Endothelial cell of umbilical vein (primary cell): ENCODE measurements at regions of chr5 and their contacts with region 1.

Region 1: GRCh38 chr5:148957591-148958202 is 105.2 kb downstream of the SH3TC2 start:
- DNase-seq: peak; percentile 66
- H3K4me3 ChIP-seq: no peak overlapping the region
- H3K27ac ChIP-seq: no peak overlapping the region
- H3K4me1 ChIP-seq: no peaks in the 10 kb centered on the region
- H3K27me3 ChIP-seq: no peaks in the 10 kb centered on the region
- CTCF ChIP-seq: peak; percentile 77 to 88
- POLR2A ChIP-seq: no peak

Region 2: GRCh38 chr5:148523139-148523538 is 434.6 kb before region 1 on chr5:
- CTCF ChIA-PET with region 1: no interaction called
- POLR2A ChIA-PET with region 1: no interaction called
- dilution Hi-C with region 1: no loop called
- intact Hi-C with region 1: no loop called
- DNase-seq: no peak
- H3K4me3 ChIP-seq: no peak overlapping the region
- H3K27ac ChIP-seq: no peak overlapping the region
- H3K4me1 ChIP-seq: no peaks in the 10 kb centered on the region
- H3K27me3 ChIP-seq: no peaks in the 10 kb centered on the region
- CTCF ChIP-seq: no peak
- POLR2A ChIP-seq: no peak

Region 3: GRCh38 chr5:148805326-148806290 is 152.1 kb before region 1 on chr5:
- CTCF ChIA-PET with region 1: interaction called, 23 read pairs
- POLR2A ChIA-PET with region 1: no interaction called
- dilution Hi-C with region 1: no loop called
- intact Hi-C with region 1: no loop called
- DNase-seq: peak; percentile 77
- H3K4me3 ChIP-seq: no peak overlapping the region
- H3K27ac ChIP-seq: peak overlapping the region; percentile 10
- H3K4me1 ChIP-seq: peaks cover 35% of the 10 kb centered on the region
- H3K27me3 ChIP-seq: no peaks in the 10 kb centered on the region
- CTCF ChIP-seq: no peak
- POLR2A ChIP-seq: no peak

Region 4: DNA sequence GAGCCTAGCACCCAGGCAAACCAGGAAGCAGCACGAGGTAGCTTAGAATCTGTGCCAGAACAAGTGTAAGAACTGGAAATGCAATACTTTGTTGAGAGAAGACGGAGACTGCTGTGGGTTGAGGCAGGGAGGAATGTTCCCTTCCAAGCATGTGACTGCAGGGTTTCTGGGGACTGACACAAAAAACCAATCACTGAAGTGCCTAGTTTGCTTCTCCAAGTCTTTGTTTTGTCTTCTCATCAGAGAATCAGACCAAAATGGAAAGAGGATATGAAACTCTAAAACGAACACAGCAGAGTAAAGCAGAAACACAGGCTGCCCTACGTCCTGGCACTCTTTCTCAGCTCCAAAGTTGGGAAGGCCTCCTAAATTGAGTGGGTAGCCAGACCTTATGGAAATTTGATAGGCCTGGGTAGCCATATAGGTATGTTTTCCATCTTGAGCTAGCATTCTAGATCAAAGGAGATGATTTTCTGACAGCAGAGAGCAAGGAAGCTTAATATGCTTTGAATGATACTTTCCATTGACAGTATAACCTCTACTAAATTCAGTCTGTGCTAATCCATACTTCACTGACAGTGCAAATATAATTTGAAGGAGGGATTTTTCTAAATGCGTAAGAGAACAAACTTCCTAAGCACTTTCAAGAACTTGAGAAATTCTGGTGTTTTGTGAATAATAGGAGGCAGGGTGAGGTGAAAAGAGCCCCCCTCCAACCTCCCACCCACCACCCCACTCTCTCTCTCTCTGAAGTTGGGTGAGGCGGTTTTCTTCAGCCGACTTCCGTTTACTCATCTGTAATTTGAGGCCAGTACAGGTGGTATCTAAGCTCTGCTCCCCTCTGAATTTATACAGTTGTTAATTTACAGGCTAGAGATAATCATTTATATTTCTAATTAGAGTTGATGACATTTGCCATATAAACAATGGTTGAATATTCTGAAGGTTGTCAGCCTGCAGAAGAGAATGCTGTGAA is 125.8 kb before region 1 on chr5:
- CTCF ChIA-PET with region 1: interaction called, 28 read pairs
- POLR2A ChIA-PET with region 1: no interaction called
- dilution Hi-C with region 1: no loop called
- intact Hi-C with region 1: no loop called
- DNase-seq: no peak
- H3K4me3 ChIP-seq: no peak overlapping the region
- H3K27ac ChIP-seq: no peak overlapping the region
- H3K4me1 ChIP-seq: peaks cover 22% of the 10 kb centered on the region
- H3K27me3 ChIP-seq: no peaks in the 10 kb centered on the region
- CTCF ChIP-seq: no peak
- POLR2A ChIP-seq: no peak

Region 5: GRCh38 chr5:148924817-148925216 is 32.9 kb before region 1 on chr5:
- CTCF ChIA-PET with region 1: interaction called, 13 read pairs
- POLR2A ChIA-PET with region 1: no interaction called
- dilution Hi-C with region 1: no loop called
- intact Hi-C with region 1: no loop called
- DNase-seq: peak; percentile 82
- H3K4me3 ChIP-seq: no peak overlapping the region
- H3K27ac ChIP-seq: peak overlapping the region; percentile 41
- H3K4me1 ChIP-seq: peaks cover 25% of the 10 kb centered on the region
- H3K27me3 ChIP-seq: no peaks in the 10 kb centered on the region
- CTCF ChIP-seq: no peak
- POLR2A ChIP-seq: no peak

Region 6: GRCh38 chr5:148979104-148979723 is 21.5 kb after region 1 on chr5:
- CTCF ChIA-PET with region 1: interaction called, 55 read pairs
- POLR2A ChIA-PET with region 1: no interaction called
- dilution Hi-C with region 1: no loop called
- intact Hi-C with region 1: no loop called
- DNase-seq: no peak
- H3K4me3 ChIP-seq: no peak overlapping the region
- H3K27ac ChIP-seq: no peak overlapping the region
- H3K4me1 ChIP-seq: peaks cover 28% of the 10 kb centered on the region
- H3K27me3 ChIP-seq: no peaks in the 10 kb centered on the region
- CTCF ChIP-seq: no peak
- POLR2A ChIP-seq: no peak

Region 7: DNA sequence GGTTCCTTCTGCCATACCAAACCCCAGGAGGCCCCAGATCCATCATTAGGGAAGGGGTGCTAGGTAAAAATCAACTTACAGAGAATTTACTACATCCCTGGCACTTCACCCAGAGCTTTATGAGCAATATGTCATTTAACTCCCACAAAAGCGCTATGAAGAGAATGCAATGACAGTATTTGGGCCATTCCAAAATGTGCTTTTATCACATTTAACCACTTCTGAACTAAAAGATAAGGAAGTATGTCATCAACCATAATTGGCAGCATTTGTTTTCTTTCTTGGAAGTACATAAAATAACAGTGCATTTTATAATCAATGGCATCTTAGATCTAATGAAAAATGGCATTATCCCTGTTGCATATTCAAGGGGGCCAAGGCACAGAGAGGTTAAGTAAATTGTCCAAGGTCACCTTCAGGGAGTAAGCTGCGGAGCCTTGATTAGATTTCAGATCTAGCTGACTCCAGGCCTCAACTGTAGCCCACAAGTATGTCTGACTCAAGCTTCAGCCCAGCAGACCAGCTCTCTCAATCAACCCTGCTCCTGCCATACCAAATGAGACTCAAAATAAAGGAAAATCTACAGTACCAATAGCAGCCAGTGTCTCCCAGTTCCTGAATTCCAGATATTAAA is 88.6 kb after region 1 on chr5:
- CTCF ChIA-PET with region 1: no interaction called
- POLR2A ChIA-PET with region 1: no interaction called
- dilution Hi-C with region 1: no loop called
- intact Hi-C with region 1: no loop called
- DNase-seq: peak; percentile 21
- H3K4me3 ChIP-seq: no peak overlapping the region
- H3K27ac ChIP-seq: no peak overlapping the region
- H3K4me1 ChIP-seq: peaks cover 15% of the 10 kb centered on the region
- H3K27me3 ChIP-seq: no peaks in the 10 kb centered on the region
- CTCF ChIP-seq: no peak
- POLR2A ChIP-seq: no peak